Left lung (tissue), 14 donors: ENCODE measurements at regions of chr4 and their contacts with region 1.

Region 1: GRCh38 chr4:99563310-99564186 is at the start of gene TRMT10A:
- DNase-seq: peak; percentile 97 to 100 (median 98)
- ATAC-seq: peak; percentile 95
- H3K4me3 ChIP-seq: peak within 1 kb of the TSS; percentile 51 to 62
- H3K27ac ChIP-seq: peak within 1 kb of the TSS; percentile 97 to 98
- H3K4me1 ChIP-seq: peaks cover 0 to 5% of the 10 kb centered on the region in 2 donors
- H3K27me3 ChIP-seq: no peaks in the 10 kb centered on the region
- CTCF ChIP-seq: peak in 1 of 2 donors; percentile 29
- polyA plus RNA-seq, gene TRMT10A: 12.0 to 15.1 (median 14.0) TPM

Region 2: DNA sequence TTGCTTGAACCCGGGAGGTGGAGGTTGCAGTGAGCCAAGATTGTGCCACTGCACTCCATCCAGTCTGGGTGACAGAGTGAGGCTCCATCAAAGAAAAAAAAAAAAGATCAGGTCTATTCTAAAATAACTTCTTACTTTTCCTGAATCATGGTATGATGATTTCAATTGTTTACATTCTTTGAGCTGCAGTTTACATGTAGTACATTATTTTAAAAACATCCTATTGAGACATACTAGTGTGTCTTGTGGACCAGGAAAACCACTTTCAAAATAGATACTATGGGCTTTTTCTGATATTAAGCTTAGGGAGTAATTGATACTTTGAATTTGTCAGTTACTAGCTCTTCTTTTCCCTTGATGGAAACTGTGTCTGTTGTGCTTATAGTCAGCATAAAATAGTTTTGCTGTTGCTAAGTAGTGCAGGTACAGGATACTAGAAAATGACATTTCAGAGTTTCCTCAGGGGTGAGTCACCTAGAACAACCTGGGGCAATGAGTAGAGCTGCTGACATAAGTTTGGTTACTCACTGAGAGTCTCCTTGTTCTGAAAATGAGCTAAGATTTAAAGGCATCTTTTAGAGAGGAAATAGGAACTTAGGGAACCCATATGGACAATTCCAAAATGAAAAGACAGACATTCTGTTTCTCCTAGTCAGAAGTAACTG is 147.3 kb after region 1 on chr4:
- intact Hi-C with region 1: no loop called
- DNase-seq: no peak
- ATAC-seq: peak; percentile 79
- H3K4me3 ChIP-seq: no peak overlapping the region
- H3K27ac ChIP-seq: no peak overlapping the region
- H3K4me1 ChIP-seq: no peaks in the 10 kb centered on the region
- H3K27me3 ChIP-seq: no peaks in the 10 kb centered on the region
- CTCF ChIP-seq: no peak

Region 3: DNA sequence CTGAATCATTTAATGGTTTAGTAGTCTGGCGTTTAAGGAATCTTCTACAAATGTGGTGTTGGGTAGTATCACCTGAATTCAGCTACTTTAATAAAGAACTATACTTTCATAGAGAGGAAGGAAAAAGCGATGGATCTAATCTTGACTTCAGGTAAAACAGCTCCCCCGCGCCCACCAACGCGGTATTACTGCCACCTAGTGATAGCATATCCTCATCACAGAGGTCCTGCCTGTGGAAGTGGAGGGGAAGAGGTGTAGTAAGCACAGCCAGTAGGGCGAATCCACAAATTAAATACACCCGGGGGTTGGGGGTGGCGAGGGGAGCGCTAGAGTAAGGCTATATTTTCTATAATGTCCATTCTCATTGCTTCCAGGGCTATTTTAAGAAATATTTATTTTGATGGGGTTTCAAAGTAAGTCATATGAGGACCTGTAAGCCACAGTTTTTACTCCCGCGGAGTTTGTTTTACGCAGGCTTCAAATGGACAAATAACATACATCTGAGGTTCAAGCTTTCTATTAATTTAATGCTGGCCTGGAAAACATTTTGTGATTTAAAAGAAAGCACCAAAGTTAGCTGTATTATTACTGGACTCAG is 244.8 kb after region 1 on chr4:
- intact Hi-C with region 1: loop called in 1 of 2 experiments (anchors 5 kb)
- DNase-seq: peak in 3 of 4 donors; percentile 25 to 87 (median 53)
- ATAC-seq: peak; percentile 96
- H3K4me3 ChIP-seq: no peak overlapping the region
- H3K27ac ChIP-seq: no peak overlapping the region
- H3K4me1 ChIP-seq: no peaks in the 10 kb centered on the region
- H3K27me3 ChIP-seq: no peaks in the 10 kb centered on the region
- CTCF ChIP-seq: peak; percentile 66 to 69

Region 4: DNA sequence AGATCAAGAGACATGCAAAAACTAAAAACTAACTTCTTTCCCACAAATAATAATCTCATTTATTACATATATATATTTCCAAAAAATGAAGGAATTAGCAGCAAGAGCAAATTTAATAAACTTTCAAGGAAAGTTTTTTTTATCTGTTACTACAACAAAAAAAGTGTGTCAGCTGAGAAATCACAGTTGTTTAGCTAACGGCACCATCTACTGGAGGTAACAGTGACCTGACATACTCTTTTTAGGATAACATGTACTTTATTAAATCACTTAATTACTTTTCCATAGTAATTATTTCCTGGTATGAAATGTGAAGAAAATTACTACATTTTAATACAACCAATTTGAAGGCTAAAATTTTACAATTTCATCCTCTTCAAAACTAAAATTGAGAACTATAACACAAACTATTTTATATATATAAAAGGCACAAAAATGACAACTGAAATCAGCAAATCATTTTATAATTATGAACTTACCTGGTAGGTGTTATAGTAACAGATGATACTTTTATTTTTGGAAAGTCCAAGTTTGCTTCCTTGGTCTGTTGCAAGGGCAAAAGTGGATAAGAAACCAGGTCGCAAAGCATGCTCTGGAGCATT is 321.6 kb after region 1 on chr4:
- intact Hi-C with region 1: loop called in 1 of 2 experiments (anchors 5 kb)
- DNase-seq: peak in 2 of 4 donors; percentile 33 to 69
- ATAC-seq: peak; percentile 41
- H3K4me3 ChIP-seq: no peak overlapping the region
- H3K27ac ChIP-seq: no peak overlapping the region
- H3K4me1 ChIP-seq: peaks cover 0 to 18% of the 10 kb centered on the region in 2 donors
- H3K27me3 ChIP-seq: no peaks in the 10 kb centered on the region
- CTCF ChIP-seq: no peak

Region 5: GRCh38 chr4:99949034-99949998 is 385.8 kb after region 1 on chr4:
- intact Hi-C with region 1: loop called in 1 of 2 experiments (anchors 5 kb)
- DNase-seq: peak; percentile 90 to 95 (median 92)
- ATAC-seq: peak; percentile 60
- H3K4me3 ChIP-seq: peak overlapping the region; percentile 59 to 74
- H3K27ac ChIP-seq: peak overlapping the region; percentile 83 to 89
- H3K4me1 ChIP-seq: peaks cover 2 to 45% of the 10 kb centered on the region in 2 donors
- H3K27me3 ChIP-seq: no peaks in the 10 kb centered on the region
- CTCF ChIP-seq: peak; percentile 75 to 89